ENCODE measurements at regions of chr13 and their contacts with region 1.

Region 1: GRCh38 chr13:36680913-36681312 is 7.1 kb downstream of the SERTM1 start:
- DNase-seq: no peak
- H3K4me3 ChIP-seq: no peak overlapping the region
- H3K27ac ChIP-seq: no peak overlapping the region
- H3K4me1 ChIP-seq: no peaks in the 10 kb centered on the region
- H3K27me3 ChIP-seq: peaks cover 38% of the 10 kb centered on the region
- CTCF ChIP-seq: no peak
- EP300 ChIP-seq: no peak
- POLR2A ChIP-seq: no peak

Region 2: DNA sequence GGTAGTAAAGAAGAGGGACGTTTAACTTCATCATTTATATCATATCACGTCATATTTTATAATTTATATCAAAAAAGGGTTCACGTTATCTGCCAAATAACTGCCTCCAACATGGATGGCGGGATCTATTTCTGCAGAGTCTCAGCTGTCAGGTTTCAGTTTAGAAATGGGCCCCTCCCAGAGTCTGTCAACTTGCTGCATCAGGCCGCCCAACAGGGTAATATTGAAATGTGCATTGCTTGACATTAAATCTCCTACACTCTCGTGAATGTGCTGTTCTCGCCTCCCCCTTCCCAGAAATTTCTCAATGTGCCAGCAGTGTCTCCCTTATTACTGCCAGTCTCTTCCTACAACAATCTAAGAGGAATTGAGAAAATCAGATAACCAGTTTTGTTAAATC is 1091.7 kb after region 1 on chr13:
- in situ Hi-C with region 1: no loop called
- intact Hi-C with region 1: loop called (anchors 5 kb)
- DNase-seq: no peak
- H3K4me3 ChIP-seq: no peak overlapping the region
- H3K27ac ChIP-seq: no peak overlapping the region
- H3K4me1 ChIP-seq: no peaks in the 10 kb centered on the region
- H3K27me3 ChIP-seq: no peaks in the 10 kb centered on the region
- CTCF ChIP-seq: no peak
- EP300 ChIP-seq: no peak
- POLR2A ChIP-seq: no peak

Measured in transverse colon (tissue), 4 donors.